Breast epithelium (tissue), 4 donors: ENCODE measurements at regions of chrX and their contacts with region 1.

Region 1: GRCh38 chrX:1246816-1247215 is 21.8 kb upstream of the CSF2RA start:
- DNase-seq: peak in 1 of 2 donors; percentile 54
- H3K4me3 ChIP-seq: no peak overlapping the region
- H3K27ac ChIP-seq: no peak overlapping the region
- H3K4me1 ChIP-seq: no peaks in the 10 kb centered on the region
- H3K27me3 ChIP-seq: peaks cover 0 to 15% of the 10 kb centered on the region in 2 donors
- CTCF ChIP-seq: peak in 2 of 3 donors; percentile 39 to 63
- POLR2A ChIP-seq: no peak

Region 2: DNA sequence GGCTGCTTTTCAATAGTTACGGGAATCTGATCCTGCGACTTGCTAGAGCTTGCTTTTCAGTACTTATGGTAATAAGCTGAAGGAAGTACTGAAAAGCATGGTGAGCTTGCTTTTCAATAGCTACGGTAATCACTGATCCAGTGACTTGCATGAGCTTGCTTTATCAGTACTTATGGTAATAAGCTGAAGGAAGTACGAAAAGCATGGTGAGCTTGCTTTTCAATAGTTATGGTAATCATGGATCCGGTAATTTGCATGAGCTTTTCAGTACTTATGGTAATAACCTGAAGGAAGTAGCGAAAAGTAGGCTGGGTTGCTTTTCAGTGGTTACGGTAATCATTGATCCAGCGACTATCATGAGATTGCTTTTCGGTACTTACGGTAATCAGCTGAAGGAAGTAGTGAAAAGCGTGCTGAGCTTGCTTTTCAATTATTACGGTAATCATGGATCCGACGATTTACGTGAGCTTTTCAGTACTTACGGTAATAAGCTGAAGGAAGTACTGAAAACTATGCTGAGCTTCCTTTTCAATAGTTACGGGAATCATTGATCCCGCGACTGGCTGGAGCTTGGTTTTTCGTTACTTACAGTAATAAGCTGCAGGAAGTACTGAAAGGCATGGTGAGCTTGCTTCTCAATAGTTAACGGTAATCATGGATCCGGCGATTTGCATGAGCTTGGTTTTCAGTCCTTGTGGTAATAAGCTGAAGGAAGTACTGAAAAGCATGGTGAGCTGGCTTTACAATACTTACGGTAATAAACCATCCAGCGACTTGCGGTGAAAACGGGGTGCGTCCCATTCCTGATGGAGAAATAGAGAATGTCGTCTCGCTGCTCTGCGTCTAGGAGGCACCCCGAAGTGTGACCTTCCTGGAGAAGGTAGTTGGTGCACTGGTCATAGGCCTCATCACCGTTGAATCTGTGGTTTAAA is 40.9 kb before region 1 on chrX:
- intact Hi-C with region 1: no loop called
- DNase-seq: peak in 1 of 2 donors; percentile 15
- H3K4me3 ChIP-seq: peak overlapping the region; percentile 35 to 64 (median 38)
- H3K27ac ChIP-seq: no peak overlapping the region
- H3K4me1 ChIP-seq: no peaks in the 10 kb centered on the region
- H3K27me3 ChIP-seq: no peaks in the 10 kb centered on the region
- CTCF ChIP-seq: no peak
- POLR2A ChIP-seq: no peak

Region 3: DNA sequence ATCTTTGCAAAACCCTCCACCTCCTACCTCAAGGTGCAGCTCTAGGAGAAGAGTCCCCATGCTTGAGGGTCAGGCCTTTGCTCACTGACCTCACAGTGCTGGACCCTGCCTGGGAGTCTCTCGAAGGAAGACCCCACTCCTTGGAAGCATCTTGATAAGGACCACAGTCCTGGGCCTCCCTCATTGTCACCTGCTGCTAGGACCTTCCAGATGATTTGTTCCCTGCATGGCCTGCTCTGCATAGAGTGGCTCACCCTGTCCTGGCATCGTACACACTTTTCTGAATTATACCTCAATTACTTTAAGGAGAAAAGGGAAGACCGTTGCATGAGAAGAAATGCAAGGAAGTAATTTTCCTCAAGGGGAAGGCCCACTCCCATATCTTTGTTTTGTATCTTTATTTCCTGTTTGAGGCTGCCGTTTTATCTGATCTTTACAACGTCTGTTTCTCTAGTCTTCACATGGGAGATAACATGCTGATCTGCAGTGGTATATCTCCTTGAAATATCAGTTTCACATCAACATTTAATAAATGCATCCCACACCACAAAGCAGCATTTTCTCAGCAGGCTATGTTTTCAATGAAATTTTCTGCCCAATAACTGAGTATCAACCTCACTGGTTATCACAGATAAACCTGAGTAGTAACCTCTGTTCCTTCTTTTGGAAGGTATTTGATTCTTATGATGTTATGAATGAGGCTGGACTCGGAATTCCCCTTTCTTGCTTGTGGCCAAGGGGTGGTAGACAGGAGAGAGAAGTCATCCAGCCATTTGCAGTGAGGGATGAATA is 329.6 kb after region 1 on chrX:
- intact Hi-C with region 1: loop called (anchors 10 kb)
- DNase-seq: no peak
- H3K4me3 ChIP-seq: no peak overlapping the region
- H3K27ac ChIP-seq: no peak overlapping the region
- H3K4me1 ChIP-seq: no peaks in the 10 kb centered on the region
- H3K27me3 ChIP-seq: no peaks in the 10 kb centered on the region
- CTCF ChIP-seq: no peak
- POLR2A ChIP-seq: no peak